Endothelial cell of umbilical vein (primary cell): ENCODE measurements at regions of chr1 and their contacts with region 1.

Region 1: DNA sequence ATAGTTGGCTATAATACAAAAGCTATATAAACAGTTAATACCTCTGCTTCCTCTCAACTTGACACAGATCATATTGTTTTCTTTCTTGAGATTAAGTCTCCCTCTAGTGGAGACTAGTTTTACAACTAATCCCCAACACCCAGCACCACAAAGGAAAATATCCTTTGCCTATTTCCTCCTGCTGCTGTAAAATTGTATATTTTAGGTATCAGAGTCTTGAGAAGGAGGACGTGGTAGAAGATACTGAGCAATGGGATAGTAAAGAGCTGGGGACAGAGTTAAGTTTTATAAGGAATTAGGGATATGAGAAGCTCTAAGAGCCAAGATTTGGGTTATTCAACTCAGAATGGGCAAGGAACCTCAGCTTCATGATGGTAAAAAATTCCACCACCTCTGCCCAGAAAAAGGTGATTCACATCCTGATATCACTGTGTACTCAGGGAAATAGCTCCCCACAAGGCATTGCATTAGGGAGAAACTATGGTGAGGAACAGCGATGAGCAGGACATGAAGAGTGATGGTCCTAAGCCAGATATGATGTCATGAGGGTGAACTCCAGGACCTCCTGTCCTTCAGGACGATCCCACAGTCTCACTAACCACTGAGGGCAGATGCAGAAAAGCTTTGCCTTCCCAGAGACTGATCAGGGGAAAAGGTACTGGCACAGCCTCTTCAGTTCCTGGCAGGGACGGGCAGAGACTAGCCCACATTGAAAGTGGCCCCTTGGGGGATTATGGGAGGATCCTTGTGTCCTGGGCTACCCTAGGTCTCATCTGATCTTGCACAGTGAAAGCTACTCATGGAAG is 14.7 kb upstream of the CFAP126 start:
- DNase-seq: peak; percentile 80
- H3K4me3 ChIP-seq: no peak overlapping the region
- H3K27ac ChIP-seq: peak overlapping the region; percentile 82
- H3K4me1 ChIP-seq: peaks cover 15% of the 10 kb centered on the region
- H3K27me3 ChIP-seq: no peaks in the 10 kb centered on the region
- CTCF ChIP-seq: peak; percentile 24 to 32
- POLR2A ChIP-seq: no peak

Region 2: DNA sequence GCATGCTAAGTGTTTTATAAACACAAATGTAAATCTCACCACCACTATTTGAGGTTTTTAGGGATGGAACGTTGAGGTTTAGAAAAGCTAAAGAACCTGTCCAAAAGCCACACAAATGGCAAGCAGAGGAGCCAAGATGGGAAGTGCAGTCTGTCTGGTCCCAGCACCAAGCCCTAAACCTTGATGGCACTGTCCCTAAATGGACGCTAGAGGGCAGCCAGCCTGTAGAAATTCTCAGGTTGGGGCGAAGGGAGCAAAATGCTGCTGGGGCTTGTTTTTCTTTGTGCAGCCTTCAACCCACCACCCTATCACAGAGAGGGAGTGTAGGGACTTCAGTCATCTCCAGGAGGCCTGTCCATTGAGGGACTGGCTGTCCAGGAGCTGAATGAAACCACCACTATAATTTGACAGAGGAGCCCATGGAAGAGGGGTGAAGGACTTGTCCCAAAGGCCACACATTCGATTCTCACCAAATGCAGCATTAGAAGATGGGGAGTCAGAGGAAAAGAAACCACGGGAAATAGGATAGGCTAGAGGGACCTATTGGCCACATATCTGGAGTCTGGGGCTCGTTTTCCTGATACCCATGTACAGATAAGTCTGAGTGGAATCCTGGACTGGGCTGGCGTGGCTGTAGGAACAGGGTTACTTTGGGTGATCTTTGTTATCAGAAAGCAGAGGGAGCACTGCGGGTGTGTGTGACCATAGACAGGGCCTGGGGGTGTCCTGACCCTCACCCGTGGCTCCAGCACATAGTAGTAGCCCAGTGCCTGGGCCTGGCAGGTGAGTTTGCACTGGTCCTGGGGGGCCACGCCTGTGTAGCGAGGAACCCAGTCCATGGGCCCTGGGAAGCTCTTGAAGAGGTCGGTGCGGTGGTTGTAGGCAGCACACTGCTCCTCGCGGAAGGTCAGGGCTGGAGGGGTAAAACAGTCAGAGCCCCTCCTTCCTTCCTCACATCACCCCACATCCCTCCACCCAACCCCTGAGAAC is 189.6 kb before region 1 on chr1:
- CTCF ChIA-PET with region 1: interaction called, 54 read pairs
- POLR2A ChIA-PET with region 1: no interaction called
- dilution Hi-C with region 1: no loop called
- intact Hi-C with region 1: loop called (anchors 1 kb)
- DNase-seq: peak; percentile 68
- H3K4me3 ChIP-seq: no peak overlapping the region
- H3K27ac ChIP-seq: no peak overlapping the region
- H3K4me1 ChIP-seq: peaks cover 21% of the 10 kb centered on the region
- H3K27me3 ChIP-seq: no peaks in the 10 kb centered on the region
- CTCF ChIP-seq: peak; percentile 93
- POLR2A ChIP-seq: no peak

Region 3: GRCh38 chr1:161216945-161217712 is 165.3 kb before region 1 on chr1:
- CTCF ChIA-PET with region 1: interaction called, 13 read pairs
- POLR2A ChIA-PET with region 1: no interaction called
- dilution Hi-C with region 1: no loop called
- intact Hi-C with region 1: no loop called
- DNase-seq: no peak
- H3K4me3 ChIP-seq: no peak overlapping the region
- H3K27ac ChIP-seq: no peak overlapping the region
- H3K4me1 ChIP-seq: peaks cover 11% of the 10 kb centered on the region
- H3K27me3 ChIP-seq: no peaks in the 10 kb centered on the region
- CTCF ChIP-seq: no peak
- POLR2A ChIP-seq: no peak

Region 4: GRCh38 chr1:161305867-161306519 is 76.4 kb before region 1 on chr1:
- CTCF ChIA-PET with region 1: interaction called, 12 read pairs
- POLR2A ChIA-PET with region 1: no interaction called
- dilution Hi-C with region 1: no loop called
- intact Hi-C with region 1: loop called (anchors 5 kb)
- DNase-seq: peak; percentile 64
- H3K4me3 ChIP-seq: peak overlapping the region; percentile 12 to 75 (median 33)
- H3K27ac ChIP-seq: no peak overlapping the region
- H3K4me1 ChIP-seq: peaks cover 35% of the 10 kb centered on the region
- H3K27me3 ChIP-seq: no peaks in the 10 kb centered on the region
- CTCF ChIP-seq: peak in 1 of 2 donors; percentile 41
- POLR2A ChIP-seq: peak; percentile 48

Region 5: GRCh38 chr1:161367684-161368400 is 14.6 kb before region 1 on chr1 and contains the start of gene CFAP126:
- CTCF ChIA-PET with region 1: interaction called, 14 read pairs
- POLR2A ChIA-PET with region 1: no interaction called
- dilution Hi-C with region 1: no loop called
- intact Hi-C with region 1: no loop called
- DNase-seq: peak; percentile 81
- H3K4me3 ChIP-seq: no peak within 1 kb of the TSS
- H3K27ac ChIP-seq: peak within 1 kb of the TSS; percentile 16
- H3K4me1 ChIP-seq: peaks cover 2% of the 10 kb centered on the region
- H3K27me3 ChIP-seq: no peaks in the 10 kb centered on the region
- CTCF ChIP-seq: peak; percentile 6 to 9
- POLR2A ChIP-seq: no peak
- total RNA-seq, gene CFAP126: not detected in 2 replicates

Region 6: GRCh38 chr1:161420763-161421455 is 38.5 kb after region 1 on chr1:
- CTCF ChIA-PET with region 1: no interaction called
- POLR2A ChIA-PET with region 1: no interaction called
- dilution Hi-C with region 1: no loop called
- intact Hi-C with region 1: no loop called
- DNase-seq: no peak
- H3K4me3 ChIP-seq: no peak overlapping the region
- H3K27ac ChIP-seq: no peak overlapping the region
- H3K4me1 ChIP-seq: no peaks in the 10 kb centered on the region
- H3K27me3 ChIP-seq: peaks cover 0 to 2% of the 10 kb centered on the region in 2 experiments
- CTCF ChIP-seq: no peak
- POLR2A ChIP-seq: no peak